CD8-positive, alpha-beta T cell (primary cell): ENCODE measurements at regions of chr9 and their contacts with region 1.

Region 1: DNA sequence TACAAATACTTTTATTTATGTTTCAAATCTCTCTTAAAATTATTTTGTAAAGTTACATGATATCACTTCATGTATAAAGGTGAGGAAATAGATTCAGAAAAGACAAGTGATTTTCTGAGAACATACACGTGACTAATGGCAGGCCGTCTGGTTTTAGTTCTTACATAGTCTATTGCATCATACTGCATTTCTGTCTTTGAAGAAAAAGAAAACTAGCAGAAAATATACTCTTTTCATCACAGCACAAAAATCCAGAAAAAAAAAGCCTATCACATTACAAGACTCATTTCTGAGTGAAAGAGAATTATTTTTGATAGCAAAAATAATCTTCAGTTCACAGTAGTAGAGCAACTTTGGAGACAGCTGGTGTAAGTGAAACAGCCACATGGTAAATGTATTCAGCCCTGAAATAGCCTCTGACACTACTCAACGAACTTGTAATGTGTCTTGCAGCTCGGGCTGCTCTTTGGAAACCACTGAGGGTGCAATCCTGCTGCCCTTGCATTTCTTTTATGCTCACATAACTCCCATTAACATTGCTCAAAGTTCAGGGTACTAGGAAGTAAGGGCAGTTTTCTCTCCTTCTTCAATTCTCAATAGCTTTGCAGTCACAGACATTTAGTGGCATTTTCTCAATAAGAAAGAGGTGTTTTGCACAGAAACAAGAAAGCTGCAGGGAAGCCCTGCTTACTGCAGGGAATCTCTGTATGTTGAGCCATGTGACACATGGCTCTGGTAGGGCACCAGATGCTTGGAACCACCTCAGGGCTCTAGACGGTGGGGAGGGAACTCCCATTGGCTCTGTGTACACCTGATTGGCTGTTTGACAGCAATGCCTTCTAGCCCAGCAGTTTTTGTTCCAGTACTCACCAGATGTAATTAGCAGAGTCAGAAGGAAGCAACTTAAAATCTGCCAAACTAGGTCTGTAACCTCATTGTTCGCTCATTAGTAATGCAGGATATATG is 845.3 kb upstream of the PTPRD start:
- DNase-seq: no peak
- ATAC-seq: no peak
- H3K4me3 ChIP-seq: no peak overlapping the region
- H3K4me3 Mint-ChIP-seq: no peak overlapping the region
- H3K27ac ChIP-seq: no peak overlapping the region
- H3K27ac Mint-ChIP-seq: no peak overlapping the region
- H3K4me1 ChIP-seq: no peaks in the 10 kb centered on the region
- H3K4me1 Mint-ChIP-seq: no peaks in the 10 kb centered on the region
- H3K27me3 ChIP-seq: no peaks in the 10 kb centered on the region
- H3K27me3 Mint-ChIP-seq: no peaks in the 10 kb centered on the region
- CTCF ChIP-seq: no peak

Region 2: GRCh38 chr9:11366585-11367129 is 91.5 kb before region 1 on chr9:
- CTCF ChIA-PET with region 1: no interaction called
- POLR2A ChIA-PET with region 1: no interaction called
- intact Hi-C with region 1: no loop called
- DNase-seq: no peak
- ATAC-seq: no peak
- H3K4me3 ChIP-seq: no peak overlapping the region
- H3K4me3 Mint-ChIP-seq: no peak overlapping the region
- H3K27ac ChIP-seq: no peak overlapping the region
- H3K27ac Mint-ChIP-seq: no peak overlapping the region
- H3K4me1 ChIP-seq: no peaks in the 10 kb centered on the region
- H3K4me1 Mint-ChIP-seq: no peaks in the 10 kb centered on the region
- H3K27me3 ChIP-seq: no peaks in the 10 kb centered on the region
- H3K27me3 Mint-ChIP-seq: no peaks in the 10 kb centered on the region
- CTCF ChIP-seq: no peak

Region 3: DNA sequence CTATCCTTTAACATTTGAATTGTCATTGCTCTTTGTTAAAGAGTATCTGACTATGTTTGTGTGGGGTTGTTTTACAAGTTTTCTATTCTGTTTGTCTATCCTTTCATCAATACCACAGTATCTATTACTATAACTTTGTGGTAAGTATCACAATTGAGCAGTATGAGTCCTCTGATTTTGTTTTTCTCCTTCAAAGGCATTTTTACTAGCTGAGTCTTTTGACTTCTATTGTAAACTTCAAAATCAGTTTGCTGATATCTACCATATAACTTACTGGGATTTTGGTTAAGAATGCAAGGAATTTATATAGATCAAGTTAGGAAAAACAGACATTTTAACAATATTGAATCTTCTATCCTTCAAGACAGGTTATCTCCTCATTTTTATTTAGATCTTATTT is 55.5 kb before region 1 on chr9:
- CTCF ChIA-PET with region 1: no interaction called
- POLR2A ChIA-PET with region 1: no interaction called
- intact Hi-C with region 1: loop called in 1 of 2 experiments (anchors 5 kb)
- DNase-seq: no peak
- ATAC-seq: no peak
- H3K4me3 ChIP-seq: no peak overlapping the region
- H3K4me3 Mint-ChIP-seq: no peak overlapping the region
- H3K27ac ChIP-seq: no peak overlapping the region
- H3K27ac Mint-ChIP-seq: no peak overlapping the region
- H3K4me1 ChIP-seq: no peaks in the 10 kb centered on the region
- H3K4me1 Mint-ChIP-seq: no peaks in the 10 kb centered on the region
- H3K27me3 ChIP-seq: no peaks in the 10 kb centered on the region
- H3K27me3 Mint-ChIP-seq: no peaks in the 10 kb centered on the region
- CTCF ChIP-seq: no peak

Region 4: GRCh38 chr9:11417782-11418181 is 40.3 kb before region 1 on chr9:
- CTCF ChIA-PET with region 1: no interaction called
- POLR2A ChIA-PET with region 1: no interaction called
- intact Hi-C with region 1: loop called in 1 of 2 experiments (anchors 5 kb)
- DNase-seq: no peak
- ATAC-seq: no peak
- H3K4me3 ChIP-seq: no peak overlapping the region
- H3K4me3 Mint-ChIP-seq: no peak overlapping the region
- H3K27ac ChIP-seq: no peak overlapping the region
- H3K27ac Mint-ChIP-seq: no peak overlapping the region
- H3K4me1 ChIP-seq: no peaks in the 10 kb centered on the region
- H3K4me1 Mint-ChIP-seq: no peaks in the 10 kb centered on the region
- H3K27me3 ChIP-seq: no peaks in the 10 kb centered on the region
- H3K27me3 Mint-ChIP-seq: no peaks in the 10 kb centered on the region
- CTCF ChIP-seq: no peak

Region 5: GRCh38 chr9:11443631-11444030 is 14.5 kb before region 1 on chr9:
- CTCF ChIA-PET with region 1: no interaction called
- POLR2A ChIA-PET with region 1: no interaction called
- intact Hi-C with region 1: loop called in 1 of 2 experiments (anchors 2 kb)
- DNase-seq: no peak
- ATAC-seq: no peak
- H3K4me3 ChIP-seq: no peak overlapping the region
- H3K4me3 Mint-ChIP-seq: no peak overlapping the region
- H3K27ac ChIP-seq: no peak overlapping the region
- H3K27ac Mint-ChIP-seq: no peak overlapping the region
- H3K4me1 ChIP-seq: no peaks in the 10 kb centered on the region
- H3K4me1 Mint-ChIP-seq: no peaks in the 10 kb centered on the region
- H3K27me3 ChIP-seq: no peaks in the 10 kb centered on the region
- H3K27me3 Mint-ChIP-seq: no peaks in the 10 kb centered on the region
- CTCF ChIP-seq: no peak